CD4-positive, alpha-beta T cell (primary cell): ENCODE measurements at regions of chr10 and their contacts with region 1.

Region 1: GRCh38 chr10:1168763-1169162 is 112.6 kb downstream of the WDR37 start:
- DNase-seq: no peak
- ATAC-seq: no peak
- H3K4me3 ChIP-seq: no peak overlapping the region
- H3K4me3 Mint-ChIP-seq: no peak overlapping the region
- H3K27ac ChIP-seq: no peak overlapping the region
- H3K27ac Mint-ChIP-seq: no peak overlapping the region
- H3K4me1 ChIP-seq: no peaks in the 10 kb centered on the region
- H3K4me1 Mint-ChIP-seq: no peaks in the 10 kb centered on the region
- H3K27me3 ChIP-seq: no peaks in the 10 kb centered on the region
- H3K27me3 Mint-ChIP-seq: peaks cover 10% of the 10 kb centered on the region
- CTCF ChIP-seq: no peak

Region 2: GRCh38 chr10:1123198-1123597 is 45.6 kb before region 1 on chr10:
- CTCF ChIA-PET with region 1: no interaction called
- POLR2A ChIA-PET with region 1: no interaction called
- intact Hi-C with region 1: no loop called
- DNase-seq: peak in 1 of 14 experiments; percentile 5
- ATAC-seq: no peak
- H3K4me3 ChIP-seq: no peak overlapping the region
- H3K4me3 Mint-ChIP-seq: no peak overlapping the region
- H3K27ac ChIP-seq: no peak overlapping the region
- H3K27ac Mint-ChIP-seq: peak overlapping the region; percentile 68
- H3K4me1 ChIP-seq: peaks cover 12% of the 10 kb centered on the region
- H3K4me1 Mint-ChIP-seq: peaks cover 43% of the 10 kb centered on the region
- H3K27me3 ChIP-seq: no peaks in the 10 kb centered on the region
- H3K27me3 Mint-ChIP-seq: no peaks in the 10 kb centered on the region
- CTCF ChIP-seq: no peak

Region 3: DNA sequence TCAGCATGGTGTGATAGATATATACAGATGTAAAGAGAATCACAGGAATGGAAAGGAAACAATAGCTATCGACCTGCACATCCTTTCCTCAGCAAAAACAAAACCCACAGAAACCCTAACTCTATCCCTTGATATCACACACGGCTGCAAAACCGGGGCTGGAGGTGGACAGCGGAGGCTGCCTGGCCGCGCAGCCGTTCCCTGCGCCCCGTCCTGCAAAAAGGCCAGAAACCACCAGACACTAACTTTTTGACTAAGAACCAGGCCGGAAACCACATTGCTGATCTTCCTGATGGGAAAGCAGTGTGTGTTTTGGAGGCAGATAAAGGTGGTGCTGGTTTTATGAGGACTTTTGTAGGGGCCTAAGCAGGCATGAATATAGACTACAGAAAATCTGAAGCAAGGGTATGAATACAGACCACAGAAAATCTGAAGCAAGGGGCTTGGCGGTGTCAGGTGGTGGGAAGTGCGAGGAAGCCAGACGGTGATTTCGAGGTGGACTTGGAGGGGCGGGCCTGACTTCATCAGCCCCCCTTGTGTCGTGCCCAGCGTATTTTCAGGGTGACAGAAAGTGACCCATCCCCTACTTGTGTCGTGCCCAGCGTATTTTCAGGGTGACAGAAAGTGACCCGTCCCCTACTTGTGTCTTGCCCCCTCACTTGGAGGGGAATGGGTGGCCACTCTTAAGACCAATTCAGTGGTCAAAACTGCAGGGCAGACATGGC is 10.7 kb after region 1 on chr10:
- CTCF ChIA-PET with region 1: no interaction called
- POLR2A ChIA-PET with region 1: no interaction called
- intact Hi-C with region 1: loop called in 1 of 2 experiments (anchors 1 kb)
- DNase-seq: no peak
- ATAC-seq: no peak
- H3K4me3 ChIP-seq: no peak overlapping the region
- H3K4me3 Mint-ChIP-seq: no peak overlapping the region
- H3K27ac ChIP-seq: no peak overlapping the region
- H3K27ac Mint-ChIP-seq: no peak overlapping the region
- H3K4me1 ChIP-seq: no peaks in the 10 kb centered on the region
- H3K4me1 Mint-ChIP-seq: no peaks in the 10 kb centered on the region
- H3K27me3 ChIP-seq: no peaks in the 10 kb centered on the region
- H3K27me3 Mint-ChIP-seq: peaks cover 8% of the 10 kb centered on the region
- CTCF ChIP-seq: no peak